ENCODE measurements at regions of chrX and their contacts with region 1.

Region 1: GRCh38 chrX:107701493-107702121 is 73.3 kb downstream of the PRPS1 start:
- DNase-seq: peak; percentile 80 to 86 (median 86)
- H3K4me3 ChIP-seq: peak overlapping the region in 1 of 3 experiments; percentile 46
- H3K4me3 Mint-ChIP-seq: peak overlapping the region in 1 of 2 donors; percentile 42
- H3K27ac ChIP-seq: peak overlapping the region; percentile 87 to 90
- H3K27ac Mint-ChIP-seq: peak overlapping the region; percentile 89 to 96 (median 94)
- H3K4me1 ChIP-seq: peaks cover 41 to 43% of the 10 kb centered on the region in 2 donors
- H3K4me1 Mint-ChIP-seq: peaks cover 31% of the 10 kb centered on the region
- H3K27me3 ChIP-seq: no peaks in the 10 kb centered on the region
- H3K27me3 Mint-ChIP-seq: peaks cover 1 to 5% (median 2%) of the 10 kb centered on the region in 3 donors
- CTCF ChIP-seq: no peak

Region 2: GRCh38 chrX:107678957-107679740 is 22.5 kb before region 1 on chrX:
- intact Hi-C with region 1: loop called in 1 of 2 experiments (anchors 2 kb)
- DNase-seq: peak; percentile 65 to 67 (median 66)
- H3K4me3 ChIP-seq: no peak overlapping the region
- H3K4me3 Mint-ChIP-seq: no peak overlapping the region
- H3K27ac ChIP-seq: peak overlapping the region; percentile 40 to 79
- H3K27ac Mint-ChIP-seq: peak overlapping the region; percentile 65 to 99 (median 72)
- H3K4me1 ChIP-seq: peaks cover 67 to 74% of the 10 kb centered on the region in 2 donors
- H3K4me1 Mint-ChIP-seq: peaks cover 68% of the 10 kb centered on the region
- H3K27me3 ChIP-seq: no peaks in the 10 kb centered on the region
- H3K27me3 Mint-ChIP-seq: peaks cover 0 to 11% (median 3%) of the 10 kb centered on the region in 3 donors
- CTCF ChIP-seq: no peak

Measured in CD14-positive monocyte (primary cell).